ENCODE measurements at regions of chr7 and their contacts with region 1.

Region 1: GRCh38 chr7:99990460-99990852 is 14.6 kb upstream of the AZGP1 start:
- DNase-seq: no peak
- ATAC-seq: no peak
- H3K4me3 ChIP-seq: no peak overlapping the region
- H3K27ac ChIP-seq: no peak overlapping the region
- H3K4me1 ChIP-seq: peaks cover 10% of the 10 kb centered on the region; the same call in 1 of the 2 replicates
- H3K27me3 ChIP-seq: no peaks in the 10 kb centered on the region
- CTCF ChIP-seq: no peak

Region 2: DNA sequence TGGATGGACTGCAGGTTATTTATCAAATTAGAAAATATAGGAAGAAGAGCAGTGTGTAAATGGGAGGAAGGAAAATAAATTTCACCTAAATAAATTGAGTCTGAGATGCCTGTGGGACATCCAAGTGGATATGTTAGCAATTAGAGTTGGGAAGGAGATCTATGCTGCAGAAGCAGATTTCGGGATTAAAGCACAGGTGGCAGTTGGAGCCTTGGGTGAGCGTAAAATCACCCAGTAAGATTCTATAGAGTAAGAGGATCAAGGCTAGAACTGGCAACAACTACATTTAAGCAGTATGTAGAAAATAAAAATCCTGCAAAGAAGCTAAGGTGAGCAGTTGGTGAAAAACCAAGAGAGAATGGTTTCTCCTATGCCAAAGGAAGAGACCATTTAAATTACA is 79.5 kb before region 1 on chr7:
- CTCF ChIA-PET with region 1: interaction called, 6 read pairs
- POLR2A ChIA-PET with region 1: no interaction called
- in situ Hi-C with region 1: no loop called
- intact Hi-C with region 1: loop called (anchors 5 kb)
- DNase-seq: no peak
- ATAC-seq: no peak
- H3K4me3 ChIP-seq: no peak overlapping the region
- H3K27ac ChIP-seq: no peak overlapping the region
- H3K4me1 ChIP-seq: no peaks in the 10 kb centered on the region
- H3K27me3 ChIP-seq: no peaks in the 10 kb centered on the region
- CTCF ChIP-seq: no peak

Region 3: GRCh38 chr7:99953649-99954048 is 36.8 kb before region 1 on chr7:
- CTCF ChIA-PET with region 1: no interaction called
- POLR2A ChIA-PET with region 1: no interaction called
- in situ Hi-C with region 1: no loop called
- intact Hi-C with region 1: no loop called
- DNase-seq: no peak
- ATAC-seq: no peak
- H3K4me3 ChIP-seq: no peak overlapping the region
- H3K27ac ChIP-seq: no peak overlapping the region
- H3K4me1 ChIP-seq: no peaks in the 10 kb centered on the region
- H3K27me3 ChIP-seq: peaks cover 5% of the 10 kb centered on the region; the same call in 1 of the 2 replicates
- CTCF ChIP-seq: no peak